ENCODE measurements at regions of chr11 and their contacts with region 1.

Region 1: DNA sequence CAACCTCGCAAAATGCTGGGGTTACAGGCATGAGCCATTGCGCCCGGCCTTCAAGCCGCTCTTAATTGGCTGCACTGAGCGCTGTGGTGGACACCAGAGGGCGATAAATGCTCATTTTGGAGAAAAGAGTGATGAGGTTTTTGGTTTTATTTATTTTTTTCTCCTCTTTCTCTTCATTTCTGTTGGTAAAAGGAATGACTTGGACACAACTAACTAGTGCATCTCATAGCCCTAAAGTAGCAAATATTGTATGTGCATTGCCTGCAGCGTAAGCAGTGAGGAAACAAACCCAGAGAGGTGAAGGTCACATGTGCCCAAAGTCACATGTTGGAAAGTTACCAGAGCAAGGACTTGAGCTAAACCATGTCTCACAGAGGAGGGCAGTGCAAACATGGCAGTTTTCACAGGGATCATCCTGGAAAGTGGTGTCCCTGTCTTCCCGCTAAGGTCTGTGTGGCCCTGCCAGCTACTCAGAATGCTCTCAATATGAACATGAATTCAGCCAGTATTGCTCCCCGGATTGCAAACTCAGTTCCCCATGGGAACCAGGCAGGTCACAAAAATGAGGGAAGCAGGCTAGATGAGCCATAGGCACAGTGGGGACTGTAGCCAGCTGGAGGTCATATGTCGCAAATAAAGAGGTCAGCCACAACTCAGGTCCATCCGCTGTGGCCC is 8.6 kb upstream of the CD82 start:
- DNase-seq: peak; percentile 84
- ATAC-seq: peak; percentile 76
- H3K4me3 Mint-ChIP-seq: no peak overlapping the region
- H3K27ac Mint-ChIP-seq: peak overlapping the region; percentile 35
- H3K4me1 Mint-ChIP-seq: peaks cover 27% of the 10 kb centered on the region
- H3K27me3 Mint-ChIP-seq: no peaks in the 10 kb centered on the region

Region 2: GRCh38 chr11:44505581-44506054 is 51.3 kb before region 1 on chr11:
- CTCF ChIA-PET with region 1: no interaction called
- POLR2A ChIA-PET with region 1: no interaction called
- intact Hi-C with region 1: no loop called
- DNase-seq: no peak
- ATAC-seq: peak; percentile 39
- H3K4me3 Mint-ChIP-seq: no peak overlapping the region
- H3K27ac Mint-ChIP-seq: no peak overlapping the region
- H3K4me1 Mint-ChIP-seq: no peaks in the 10 kb centered on the region
- H3K27me3 Mint-ChIP-seq: peaks cover 8% of the 10 kb centered on the region

Region 3: DNA sequence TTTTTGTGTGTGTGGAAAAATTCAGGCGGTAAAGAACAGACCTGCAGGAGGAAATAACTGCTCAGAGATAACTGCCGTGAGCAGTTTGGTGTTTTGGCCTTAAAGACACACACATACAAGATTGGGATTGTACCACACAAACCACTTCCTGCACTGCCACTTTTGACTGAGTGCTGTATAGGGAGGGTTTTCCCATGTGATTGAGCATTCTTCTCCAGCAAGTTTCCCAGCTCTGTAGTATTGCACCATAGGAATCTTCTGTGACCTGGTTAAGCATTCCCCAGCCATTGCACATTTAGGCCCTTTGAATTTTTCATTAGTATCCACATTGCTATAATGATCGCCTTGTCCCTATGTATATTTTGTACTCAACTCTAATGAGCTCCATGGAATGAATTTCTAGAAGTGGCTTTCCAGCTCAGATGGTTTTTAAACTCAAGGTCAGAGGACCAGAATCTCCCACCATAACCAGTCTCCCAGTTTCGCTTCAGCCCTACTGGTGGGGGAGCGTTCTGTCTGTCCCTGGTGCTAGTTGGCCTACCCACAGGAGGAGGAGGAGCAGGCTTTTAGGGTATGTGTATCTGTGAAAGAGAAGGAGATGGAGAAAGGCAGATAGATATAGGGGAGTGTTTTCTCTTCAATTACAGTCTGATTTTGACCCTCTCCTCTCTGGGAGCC is 17.9 kb after region 1 on chr11:
- CTCF ChIA-PET with region 1: interaction called, 16 read pairs
- POLR2A ChIA-PET with region 1: no interaction called
- intact Hi-C with region 1: no loop called
- DNase-seq: peak; percentile 75
- ATAC-seq: peak; percentile 65
- H3K4me3 Mint-ChIP-seq: peak overlapping the region; percentile 51
- H3K27ac Mint-ChIP-seq: peak overlapping the region; percentile 100
- H3K4me1 Mint-ChIP-seq: peaks cover 95% of the 10 kb centered on the region
- H3K27me3 Mint-ChIP-seq: no peaks in the 10 kb centered on the region

Region 4: GRCh38 chr11:44621140-44621681 is 64.3 kb after region 1 on chr11:
- CTCF ChIA-PET with region 1: interaction called, 77 read pairs
- POLR2A ChIA-PET with region 1: interaction called, 3 read pairs
- intact Hi-C with region 1: loop called (anchors 1 kb)
- DNase-seq: peak; percentile 78
- ATAC-seq: peak; percentile 52
- H3K4me3 Mint-ChIP-seq: no peak overlapping the region
- H3K27ac Mint-ChIP-seq: no peak overlapping the region
- H3K4me1 Mint-ChIP-seq: peaks cover 38% of the 10 kb centered on the region
- H3K27me3 Mint-ChIP-seq: no peaks in the 10 kb centered on the region

Region 5: GRCh38 chr11:44673688-44674087 is 116.8 kb after region 1 on chr11:
- CTCF ChIA-PET with region 1: no interaction called
- POLR2A ChIA-PET with region 1: no interaction called
- intact Hi-C with region 1: no loop called
- DNase-seq: no peak
- ATAC-seq: no peak
- H3K4me3 Mint-ChIP-seq: no peak overlapping the region
- H3K27ac Mint-ChIP-seq: no peak overlapping the region
- H3K4me1 Mint-ChIP-seq: peaks cover 18% of the 10 kb centered on the region
- H3K27me3 Mint-ChIP-seq: no peaks in the 10 kb centered on the region

Region 6: GRCh38 chr11:44709966-44710365 is 153.1 kb after region 1 on chr11:
- CTCF ChIA-PET with region 1: no interaction called
- POLR2A ChIA-PET with region 1: no interaction called
- intact Hi-C with region 1: loop called in 1 of 2 experiments (anchors 5 kb)
- DNase-seq: no peak
- ATAC-seq: no peak
- H3K4me3 Mint-ChIP-seq: no peak overlapping the region
- H3K27ac Mint-ChIP-seq: no peak overlapping the region
- H3K4me1 Mint-ChIP-seq: peaks cover 12% of the 10 kb centered on the region
- H3K27me3 Mint-ChIP-seq: peaks cover 3% of the 10 kb centered on the region

Region 7: DNA sequence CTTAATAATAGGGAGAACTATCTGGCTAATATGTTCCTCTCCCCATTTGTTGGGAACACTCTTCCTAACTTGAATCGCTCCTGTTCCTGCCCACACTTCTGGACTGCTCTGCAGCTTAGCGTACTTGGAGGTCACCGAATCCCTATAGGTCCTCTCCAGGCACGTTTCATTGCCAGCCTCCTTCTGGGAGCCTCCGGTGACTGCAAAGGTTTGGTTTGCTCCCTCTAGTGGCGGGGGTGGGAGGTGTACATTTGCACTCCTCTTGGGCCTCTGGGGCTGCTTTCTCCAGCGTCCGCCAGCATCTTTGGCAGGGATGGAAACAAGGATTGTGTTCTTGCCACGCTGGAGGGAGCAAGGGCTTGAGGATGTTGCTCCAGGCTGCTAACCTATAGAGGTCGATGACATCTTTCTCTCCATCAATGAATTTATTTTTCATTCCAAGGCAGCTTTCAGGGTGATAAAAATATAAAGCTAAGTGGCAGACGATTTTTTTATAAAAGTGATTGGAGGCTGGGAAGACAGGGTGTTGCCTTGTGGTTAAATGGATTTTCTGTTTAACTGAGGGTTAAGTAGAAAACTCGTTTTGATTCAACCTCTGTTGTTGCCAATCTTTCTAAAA is 218.6 kb after region 1 on chr11:
- CTCF ChIA-PET with region 1: interaction called, 5 read pairs
- POLR2A ChIA-PET with region 1: no interaction called
- intact Hi-C with region 1: loop called (anchors 2 to 5 kb)
- DNase-seq: peak; percentile 72
- ATAC-seq: peak; percentile 64
- H3K4me3 Mint-ChIP-seq: no peak overlapping the region
- H3K27ac Mint-ChIP-seq: no peak overlapping the region
- H3K4me1 Mint-ChIP-seq: peaks cover 5% of the 10 kb centered on the region
- H3K27me3 Mint-ChIP-seq: no peaks in the 10 kb centered on the region

Region 8: DNA sequence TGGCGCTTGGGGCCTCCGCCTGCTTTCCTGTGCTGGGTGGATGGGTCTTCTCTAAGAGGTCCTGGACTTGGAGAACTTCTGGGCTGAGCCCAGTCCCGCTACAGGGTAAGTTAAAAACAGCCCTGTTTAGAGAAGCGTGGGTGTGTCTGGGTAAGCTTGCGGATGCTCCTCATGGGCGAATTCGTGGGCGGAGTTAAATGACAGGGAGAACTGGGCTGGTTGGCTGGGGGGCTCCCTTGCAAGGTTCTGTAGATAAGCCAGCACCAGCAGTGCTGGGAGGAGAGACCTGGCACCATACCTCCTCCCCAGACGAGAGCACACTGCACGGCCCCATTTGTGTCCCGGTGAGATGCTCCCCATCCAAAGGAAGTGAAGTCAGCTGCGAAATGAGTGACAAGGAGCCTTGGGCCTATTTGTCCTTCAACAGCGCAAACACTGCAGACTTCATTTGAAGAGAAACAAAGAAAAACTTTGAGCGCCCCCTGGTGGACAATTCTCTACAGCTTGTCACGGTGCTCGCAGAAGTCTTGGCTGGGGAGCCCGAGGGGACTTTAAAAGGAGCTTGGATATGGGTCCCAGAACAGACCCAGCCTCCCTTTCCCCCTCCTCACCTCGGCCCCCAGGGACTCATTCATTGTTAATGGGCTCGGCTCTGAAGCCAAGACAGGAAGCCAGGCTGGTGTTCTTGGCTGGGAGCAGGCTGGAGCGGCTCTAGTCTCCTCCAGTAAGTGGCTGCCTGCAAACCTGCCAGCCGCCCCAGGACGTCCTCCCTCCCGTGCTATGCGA is 354.4 kb after region 1 on chr11:
- CTCF ChIA-PET with region 1: interaction called, 11 read pairs
- POLR2A ChIA-PET with region 1: no interaction called
- intact Hi-C with region 1: loop called (anchors 1 kb)
- DNase-seq: peak; percentile 93
- ATAC-seq: peak; percentile 91
- H3K4me3 Mint-ChIP-seq: no peak overlapping the region
- H3K27ac Mint-ChIP-seq: no peak overlapping the region
- H3K4me1 Mint-ChIP-seq: peaks cover 3% of the 10 kb centered on the region
- H3K27me3 Mint-ChIP-seq: no peaks in the 10 kb centered on the region

Region 9: GRCh38 chr11:45390407-45390806 is 833.5 kb after region 1 on chr11:
- CTCF ChIA-PET with region 1: no interaction called
- POLR2A ChIA-PET with region 1: no interaction called
- intact Hi-C with region 1: no loop called
- DNase-seq: no peak
- ATAC-seq: no peak
- H3K4me3 Mint-ChIP-seq: no peak overlapping the region
- H3K27ac Mint-ChIP-seq: no peak overlapping the region
- H3K4me1 Mint-ChIP-seq: peaks cover 2% of the 10 kb centered on the region
- H3K27me3 Mint-ChIP-seq: no peaks in the 10 kb centered on the region